ENCODE measurements at regions of chr2 and their contacts with region 1.

Region 1: DNA sequence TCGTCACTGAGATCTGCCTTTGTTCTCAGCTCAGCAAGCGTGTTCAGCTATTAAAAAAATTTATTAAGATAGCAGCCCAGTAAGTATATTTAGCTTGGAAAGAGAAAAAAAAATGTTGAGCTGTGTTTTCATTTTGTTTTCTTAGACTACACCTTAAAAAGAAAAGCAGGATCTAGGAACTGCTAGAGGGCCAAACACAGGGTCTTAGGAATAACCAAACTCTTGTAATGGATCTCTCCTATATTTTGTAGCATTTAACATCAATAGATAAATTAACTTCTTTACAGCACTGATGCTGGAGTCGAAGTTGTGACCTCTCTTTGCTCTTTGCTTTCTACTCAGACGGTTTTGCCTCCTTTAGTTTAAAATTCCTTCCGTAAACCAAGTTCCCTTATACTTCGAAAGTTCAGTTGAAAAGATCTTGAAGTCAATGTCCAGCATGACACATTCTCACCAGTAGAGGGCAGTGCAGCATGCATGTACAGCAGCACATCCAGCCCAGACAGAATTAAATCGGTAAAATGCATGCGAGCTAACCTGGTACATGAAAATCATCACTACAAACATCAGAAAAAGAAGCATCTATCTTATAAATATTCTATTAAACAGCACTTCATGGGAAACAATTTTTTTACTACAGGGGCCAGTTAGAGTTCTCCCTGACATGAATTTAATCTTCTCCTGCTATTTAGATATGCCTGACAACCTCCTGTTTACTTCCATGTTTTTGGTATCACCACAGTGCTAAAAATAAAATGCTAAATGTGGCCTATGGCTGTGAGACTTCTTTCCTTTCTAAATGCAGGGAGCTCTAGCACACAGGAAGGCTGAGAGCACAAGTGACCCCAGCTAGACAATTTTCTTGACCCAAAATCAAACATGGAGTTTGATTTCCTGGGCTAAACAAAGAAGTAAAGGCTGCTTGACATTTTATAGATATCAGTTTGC is 48.2 kb upstream of the MAP3K20 start:
- DNase-seq: peak; percentile 92
- H3K4me3 ChIP-seq: no peak overlapping the region
- H3K27ac ChIP-seq: no peak overlapping the region
- H3K4me1 ChIP-seq: peaks cover 6% of the 10 kb centered on the region
- H3K27me3 ChIP-seq: no peaks in the 10 kb centered on the region
- CTCF ChIP-seq: peak; percentile 90

Region 2: DNA sequence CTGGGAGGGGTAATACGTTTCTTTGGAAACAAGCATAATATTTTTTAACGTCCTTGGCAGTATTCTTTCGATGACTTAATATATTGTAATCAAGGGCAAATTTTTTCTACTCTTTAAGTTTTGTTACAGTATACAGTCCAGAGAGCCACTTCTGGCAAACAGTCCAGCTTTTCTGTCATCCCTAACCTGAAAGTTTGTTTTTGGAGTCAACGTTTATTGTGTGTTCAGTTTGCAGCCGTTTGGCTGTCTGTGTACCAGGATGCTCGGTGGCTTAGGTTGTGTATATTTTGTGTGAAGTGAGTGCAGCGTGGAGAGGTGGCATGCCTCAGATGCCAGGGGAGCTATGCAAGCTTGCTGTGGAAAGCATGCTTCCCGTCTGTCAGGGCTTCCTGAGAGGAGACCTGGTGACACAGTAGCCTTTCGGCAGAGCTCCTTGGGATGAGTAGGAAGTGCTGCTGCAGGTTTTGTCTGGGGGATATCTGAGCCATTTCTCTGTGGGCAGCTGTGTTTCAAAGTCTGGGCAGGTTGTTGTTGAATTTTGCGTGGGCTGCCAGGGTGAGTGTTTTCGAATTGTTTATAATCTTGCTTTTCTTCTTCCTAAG is 62.9 kb after region 1 on chr2:
- intact Hi-C with region 1: loop called (anchors 5 kb)
- DNase-seq: no peak
- H3K4me3 ChIP-seq: no peak overlapping the region
- H3K27ac ChIP-seq: peak overlapping the region; percentile 25
- H3K4me1 ChIP-seq: no peaks in the 10 kb centered on the region
- H3K27me3 ChIP-seq: no peaks in the 10 kb centered on the region
- CTCF ChIP-seq: no peak

Region 3: DNA sequence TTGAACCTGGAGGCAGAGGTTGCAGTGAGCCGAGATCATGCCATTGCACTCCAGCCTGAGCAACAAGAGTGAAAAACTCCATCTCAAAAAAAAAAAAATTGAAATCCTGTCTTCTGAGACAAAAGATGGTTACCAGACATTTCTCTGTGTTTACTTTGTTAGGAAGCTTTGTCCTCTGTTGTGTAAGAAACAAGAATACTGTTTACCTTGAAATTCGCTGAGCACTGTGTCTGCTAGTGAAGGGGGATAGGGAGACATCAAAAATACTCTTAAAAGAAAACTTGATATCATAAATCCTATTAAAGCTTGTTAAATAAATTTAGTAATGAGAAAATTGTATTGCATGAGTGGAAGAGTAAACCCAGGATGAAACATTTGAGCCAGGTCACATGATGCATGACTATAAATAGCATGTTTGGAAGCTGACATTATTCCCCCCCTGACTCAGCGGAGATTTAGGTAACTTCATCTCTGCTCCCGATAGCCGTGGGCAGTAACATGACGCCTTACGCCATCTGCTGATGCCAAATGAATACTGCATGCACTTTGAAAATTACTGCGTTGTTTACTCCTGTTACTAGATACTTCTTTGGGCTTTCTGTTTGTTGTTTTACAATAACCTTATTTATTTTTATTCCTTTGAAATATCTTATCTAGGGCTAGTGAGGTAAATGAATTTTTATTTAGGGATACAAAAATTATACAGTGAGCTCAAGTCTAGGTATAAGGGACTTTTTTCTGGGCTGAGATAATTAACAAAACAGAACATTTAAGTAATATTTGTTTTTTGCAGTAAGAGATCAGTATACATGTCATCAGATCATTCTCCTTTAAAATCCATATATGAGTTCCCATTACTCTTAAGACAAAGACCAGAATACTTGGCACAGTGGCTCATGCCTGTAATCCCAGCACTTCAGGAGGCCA is 183.1 kb after region 1 on chr2:
- intact Hi-C with region 1: loop called (anchors 2 kb)
- DNase-seq: peak; percentile 74
- H3K4me3 ChIP-seq: no peak overlapping the region
- H3K27ac ChIP-seq: no peak overlapping the region
- H3K4me1 ChIP-seq: no peaks in the 10 kb centered on the region
- H3K27me3 ChIP-seq: no peaks in the 10 kb centered on the region
- CTCF ChIP-seq: peak; percentile 82